ENCODE measurements at regions of chr12 and their contacts with region 1.

Region 1: DNA sequence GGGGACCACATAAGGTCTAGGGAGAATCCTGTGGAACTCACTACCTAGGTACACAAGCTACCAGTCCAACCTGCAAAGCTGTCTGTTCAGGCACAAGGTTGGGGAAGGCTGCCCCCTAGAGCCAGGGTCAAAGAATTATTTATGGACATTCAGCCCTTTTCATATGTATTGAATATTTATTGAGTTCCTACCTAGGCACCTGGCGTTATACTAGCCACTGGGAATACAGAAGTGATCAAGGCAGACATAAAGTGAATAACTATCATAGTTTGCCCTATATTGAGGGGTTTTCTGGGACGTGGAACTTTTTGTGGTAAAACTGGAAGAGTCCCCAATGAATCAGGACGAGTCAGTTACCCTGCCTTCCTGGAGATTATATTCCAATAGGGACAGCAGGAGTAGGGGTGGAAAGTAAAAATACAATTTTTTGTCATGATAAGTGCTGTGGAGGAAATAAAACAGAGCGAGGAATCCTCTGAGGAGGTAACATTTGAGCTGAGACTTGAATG is 5.8 kb upstream of the SLC48A1 start:
- DNase-seq: peak; percentile 78
- ATAC-seq: peak; percentile 74
- H3K4me3 ChIP-seq: no peak overlapping the region
- H3K4me3 Mint-ChIP-seq: no peak overlapping the region
- H3K27ac ChIP-seq: no peak overlapping the region
- H3K27ac Mint-ChIP-seq: no peak overlapping the region
- H3K4me1 ChIP-seq: peaks cover 5 to 15% of the 10 kb centered on the region in 2 donors
- H3K4me1 Mint-ChIP-seq: peaks cover 9% of the 10 kb centered on the region
- H3K27me3 ChIP-seq: no peaks in the 10 kb centered on the region
- H3K27me3 Mint-ChIP-seq: peaks cover 4% of the 10 kb centered on the region
- CTCF ChIP-seq: peak; percentile 80

Region 2: DNA sequence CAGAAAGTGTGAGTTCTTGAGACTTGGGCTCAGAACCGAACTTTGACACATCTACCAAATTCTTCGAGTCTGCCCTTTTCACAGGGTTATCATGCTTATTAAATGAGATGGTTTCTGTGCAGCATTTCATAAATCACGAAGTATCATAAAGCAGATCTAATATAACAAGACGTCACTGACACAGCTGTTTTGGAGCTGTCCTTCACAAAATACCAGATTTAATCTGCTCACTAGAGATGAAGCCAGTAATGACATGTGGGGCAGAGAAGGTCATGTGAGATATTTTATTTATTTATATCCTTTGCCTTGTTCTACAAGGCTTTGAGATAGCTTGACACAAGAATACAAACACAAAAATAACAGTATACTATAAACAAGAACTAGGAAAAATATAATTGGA is 188.4 kb before region 1 on chr12:
- CTCF ChIA-PET with region 1: no interaction called
- POLR2A ChIA-PET with region 1: no interaction called
- intact Hi-C with region 1: no loop called
- DNase-seq: no peak
- ATAC-seq: no peak
- H3K4me3 ChIP-seq: no peak overlapping the region
- H3K4me3 Mint-ChIP-seq: no peak overlapping the region
- H3K27ac ChIP-seq: no peak overlapping the region
- H3K27ac Mint-ChIP-seq: no peak overlapping the region
- H3K4me1 ChIP-seq: no peaks in the 10 kb centered on the region
- H3K4me1 Mint-ChIP-seq: no peaks in the 10 kb centered on the region
- H3K27me3 ChIP-seq: peaks cover 0 to 4% (median 0%) of the 10 kb centered on the region in 4 experiments
- H3K27me3 Mint-ChIP-seq: peaks cover 8% of the 10 kb centered on the region
- CTCF ChIP-seq: no peak

Region 3: GRCh38 chr12:47616440-47616839 is 150.8 kb before region 1 on chr12:
- CTCF ChIA-PET with region 1: no interaction called
- POLR2A ChIA-PET with region 1: no interaction called
- intact Hi-C with region 1: no loop called
- DNase-seq: no peak
- ATAC-seq: no peak
- H3K4me3 ChIP-seq: no peak overlapping the region
- H3K4me3 Mint-ChIP-seq: no peak overlapping the region
- H3K27ac ChIP-seq: no peak overlapping the region
- H3K27ac Mint-ChIP-seq: no peak overlapping the region
- H3K4me1 ChIP-seq: no peaks in the 10 kb centered on the region
- H3K4me1 Mint-ChIP-seq: no peaks in the 10 kb centered on the region
- H3K27me3 ChIP-seq: no peaks in the 10 kb centered on the region
- H3K27me3 Mint-ChIP-seq: no peaks in the 10 kb centered on the region
- CTCF ChIP-seq: no peak

Region 4: GRCh38 chr12:47698055-47698454 is 69.2 kb before region 1 on chr12:
- CTCF ChIA-PET with region 1: interaction called, 11 read pairs
- POLR2A ChIA-PET with region 1: no interaction called
- intact Hi-C with region 1: no loop called
- DNase-seq: peak; percentile 54
- ATAC-seq: peak; percentile 68
- H3K4me3 ChIP-seq: peak overlapping the region in 1 of 5 experiments; percentile 11
- H3K4me3 Mint-ChIP-seq: peak overlapping the region; percentile 21
- H3K27ac ChIP-seq: peak overlapping the region in 1 of 2 donors; percentile 39
- H3K27ac Mint-ChIP-seq: peak overlapping the region; percentile 22
- H3K4me1 ChIP-seq: peaks cover 17 to 20% of the 10 kb centered on the region in 2 donors
- H3K4me1 Mint-ChIP-seq: peaks cover 46% of the 10 kb centered on the region
- H3K27me3 ChIP-seq: no peaks in the 10 kb centered on the region
- H3K27me3 Mint-ChIP-seq: no peaks in the 10 kb centered on the region
- CTCF ChIP-seq: no peak

Region 5: DNA sequence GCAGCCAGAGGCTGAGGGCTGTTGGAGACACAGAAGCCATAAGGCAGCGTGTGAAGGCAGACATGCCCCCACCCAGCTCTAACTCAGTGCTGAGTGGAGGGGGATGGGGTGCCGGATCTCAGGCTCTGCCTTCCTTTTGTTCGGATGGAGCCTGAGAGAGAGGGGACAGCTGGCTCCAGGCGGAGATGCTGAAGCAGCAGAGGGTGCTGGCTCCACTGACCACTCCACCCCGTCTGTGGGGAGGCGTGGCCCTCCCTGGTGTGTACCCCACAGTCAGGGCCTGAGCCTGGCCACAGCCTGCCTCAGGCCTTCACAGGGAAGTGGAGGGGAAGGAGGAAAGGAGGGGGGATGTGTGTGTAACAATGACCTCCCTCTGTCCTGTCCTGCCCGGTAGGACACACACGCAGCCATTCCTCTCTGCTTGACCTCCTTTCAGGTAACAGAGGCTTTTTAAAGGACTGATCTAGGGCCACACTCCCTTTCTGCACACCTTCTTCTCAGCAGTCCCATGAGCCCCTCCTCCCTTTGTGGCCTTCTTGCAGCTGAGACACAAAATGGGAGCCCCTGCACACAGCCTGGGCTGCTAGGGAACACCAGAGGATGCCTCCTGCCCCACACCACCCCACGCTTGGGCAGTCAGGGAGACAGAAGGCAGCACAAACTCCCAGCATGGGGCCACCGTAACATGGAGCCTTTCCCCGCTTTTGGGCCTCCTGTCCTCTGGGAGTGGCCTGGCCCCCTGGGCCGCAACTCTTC is 32.4 kb before region 1 on chr12:
- CTCF ChIA-PET with region 1: interaction called, 515 read pairs
- POLR2A ChIA-PET with region 1: interaction called, 3 read pairs
- intact Hi-C with region 1: no loop called
- DNase-seq: no peak
- ATAC-seq: no peak
- H3K4me3 ChIP-seq: no peak overlapping the region
- H3K4me3 Mint-ChIP-seq: no peak overlapping the region
- H3K27ac ChIP-seq: no peak overlapping the region
- H3K27ac Mint-ChIP-seq: no peak overlapping the region
- H3K4me1 ChIP-seq: peaks cover 9 to 18% of the 10 kb centered on the region in 2 donors
- H3K4me1 Mint-ChIP-seq: peaks cover 17% of the 10 kb centered on the region
- H3K27me3 ChIP-seq: no peaks in the 10 kb centered on the region
- H3K27me3 Mint-ChIP-seq: no peaks in the 10 kb centered on the region
- CTCF ChIP-seq: no peak

Region 6: DNA sequence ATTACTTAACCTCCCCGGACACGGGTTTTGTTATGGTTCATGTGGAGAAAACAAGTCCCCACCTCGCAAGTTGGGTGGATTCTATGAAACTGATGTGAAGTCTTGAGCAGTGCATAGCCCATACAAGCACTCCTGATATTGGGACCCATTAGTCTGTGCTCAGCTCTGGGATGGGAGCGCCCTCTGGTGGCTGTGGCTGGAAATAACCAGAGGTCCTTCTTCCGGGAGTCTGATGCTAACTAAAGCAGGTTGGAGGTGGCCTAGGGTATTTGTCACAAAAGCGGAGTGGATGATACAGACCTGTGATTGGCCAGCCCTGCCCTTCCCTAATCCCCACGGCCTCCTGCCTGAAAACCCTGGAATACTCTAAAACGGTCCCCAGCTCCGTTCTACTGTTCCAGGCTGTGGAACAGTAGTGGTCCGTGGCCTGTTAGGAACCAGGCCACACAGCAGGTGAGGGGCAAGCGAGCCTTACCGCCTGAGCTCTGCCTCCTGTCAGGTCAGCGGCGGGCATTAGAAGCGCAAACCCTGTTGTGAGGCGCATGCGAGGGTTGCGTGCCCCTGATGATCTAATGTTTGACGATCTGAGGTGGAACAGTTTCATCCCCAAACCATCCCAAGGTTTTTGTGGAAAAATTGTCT is 12.2 kb after region 1 on chr12:
- CTCF ChIA-PET with region 1: interaction called, 205 read pairs
- POLR2A ChIA-PET with region 1: no interaction called
- intact Hi-C with region 1: no loop called
- DNase-seq: peak; percentile 90
- ATAC-seq: peak; percentile 90
- H3K4me3 ChIP-seq: no peak overlapping the region
- H3K4me3 Mint-ChIP-seq: no peak overlapping the region
- H3K27ac ChIP-seq: no peak overlapping the region
- H3K27ac Mint-ChIP-seq: peak overlapping the region; percentile 80
- H3K4me1 ChIP-seq: peaks cover 0 to 14% of the 10 kb centered on the region in 2 donors
- H3K4me1 Mint-ChIP-seq: peaks cover 23% of the 10 kb centered on the region
- H3K27me3 ChIP-seq: no peaks in the 10 kb centered on the region
- H3K27me3 Mint-ChIP-seq: no peaks in the 10 kb centered on the region
- CTCF ChIP-seq: peak; percentile 92